ENCODE measurements at regions of chr4 and their contacts with region 1.

Region 1: GRCh38 chr4:121811122-121811521 is 10.0 kb downstream of the EXOSC9 start:
- DNase-seq: no peak
- ATAC-seq: peak; percentile 76
- H3K4me3 Mint-ChIP-seq: no peak overlapping the region
- H3K27ac Mint-ChIP-seq: peak overlapping the region; percentile 71
- H3K4me1 Mint-ChIP-seq: peaks cover 37% of the 10 kb centered on the region
- H3K27me3 Mint-ChIP-seq: no peaks in the 10 kb centered on the region

Region 2: GRCh38 chr4:121823505-121824170 is 12.5 kb after region 1 on chr4 and contains the start of gene CCNA2:
- CTCF ChIA-PET with region 1: interaction called, 10 read pairs
- DNase-seq: peak; percentile 99
- ATAC-seq: peak; percentile 95
- H3K4me3 Mint-ChIP-seq: peak within 1 kb of the TSS; percentile 99
- H3K27ac Mint-ChIP-seq: peak within 1 kb of the TSS; percentile 99
- H3K4me1 Mint-ChIP-seq: peaks cover 34% of the 10 kb centered on the region
- H3K27me3 Mint-ChIP-seq: no peaks in the 10 kb centered on the region
- total RNA-seq, gene CCNA2: 125 to 129 TPM

Region 3: GRCh38 chr4:121877041-121877777 is 66.1 kb after region 1 on chr4:
- CTCF ChIA-PET with region 1: no interaction called
- DNase-seq: no peak
- ATAC-seq: no peak
- H3K4me3 Mint-ChIP-seq: no peak overlapping the region
- H3K27ac Mint-ChIP-seq: no peak overlapping the region
- H3K4me1 Mint-ChIP-seq: peaks cover 6% of the 10 kb centered on the region
- H3K27me3 Mint-ChIP-seq: peaks cover 56% of the 10 kb centered on the region

Measured in activated CD8-positive, alpha-beta memory T cell treated with anti-CD3 and anti-CD28 coated beads, Interleukin-2, amount 10 ng/mL, durations not matched to agents 7 days and 5 days (primary cell).